Panc1 (cell line): ENCODE measurements at regions of chr3 and their contacts with region 1.

Region 1: GRCh38 chr3:125240496-125240895 is 27.9 kb upstream of the SLC12A8 start:
- DNase-seq: no peak
- ATAC-seq: no peak
- H3K4me3 ChIP-seq: no peak overlapping the region
- H3K27ac ChIP-seq: no peak overlapping the region
- H3K4me1 ChIP-seq: no peaks in the 10 kb centered on the region
- H3K27me3 ChIP-seq: no peaks in the 10 kb centered on the region
- CTCF ChIP-seq: no peak

Region 2: DNA sequence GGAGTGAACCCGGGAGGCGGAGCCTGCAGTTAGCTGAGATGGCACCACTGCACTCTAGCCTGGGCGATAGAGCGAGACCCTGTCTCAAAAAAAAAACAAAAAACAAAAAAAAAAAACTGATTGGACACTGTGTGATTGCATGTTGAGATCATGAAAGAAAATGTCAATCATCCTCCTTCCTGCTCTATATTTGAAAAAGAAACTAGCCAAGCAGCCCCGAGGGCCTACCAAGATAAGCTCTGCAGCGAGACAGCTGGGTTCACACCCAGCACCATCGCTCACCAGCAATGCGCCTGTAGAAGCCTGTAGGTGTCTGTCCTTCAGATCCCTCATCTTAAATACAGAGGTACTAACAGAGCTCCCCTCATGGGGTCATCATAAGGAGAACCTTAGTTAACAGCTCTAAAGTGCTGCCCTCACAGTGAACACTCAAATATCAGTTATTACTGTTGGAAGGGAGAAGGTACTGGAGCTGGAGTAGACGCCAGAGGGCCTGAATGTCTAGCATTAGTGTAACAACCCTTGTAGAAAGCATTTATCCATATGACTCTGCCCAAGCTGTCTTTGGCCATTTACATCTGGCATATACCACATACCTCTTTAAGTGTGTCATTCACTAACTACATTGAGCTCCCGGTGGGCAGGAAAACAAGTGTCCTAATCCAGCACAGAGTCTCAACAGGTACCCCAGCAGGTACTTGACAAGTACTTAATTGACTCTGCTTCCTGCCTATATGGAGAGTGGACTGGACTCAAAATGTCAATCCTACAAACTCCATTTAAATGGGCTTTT is 1379.3 kb before region 1 on chr3:
- CTCF ChIA-PET with region 1: no interaction called
- POLR2A ChIA-PET with region 1: interaction called, 12 read pairs
- in situ Hi-C with region 1: no loop called
- intact Hi-C with region 1: no loop called
- DNase-seq: no peak
- ATAC-seq: peak; percentile 56; the same call in 1 of the 2 replicates
- H3K4me3 ChIP-seq: no peak overlapping the region
- H3K27ac ChIP-seq: no peak overlapping the region
- H3K4me1 ChIP-seq: no peaks in the 10 kb centered on the region
- H3K27me3 ChIP-seq: no peaks in the 10 kb centered on the region
- CTCF ChIP-seq: no peak

Region 3: DNA sequence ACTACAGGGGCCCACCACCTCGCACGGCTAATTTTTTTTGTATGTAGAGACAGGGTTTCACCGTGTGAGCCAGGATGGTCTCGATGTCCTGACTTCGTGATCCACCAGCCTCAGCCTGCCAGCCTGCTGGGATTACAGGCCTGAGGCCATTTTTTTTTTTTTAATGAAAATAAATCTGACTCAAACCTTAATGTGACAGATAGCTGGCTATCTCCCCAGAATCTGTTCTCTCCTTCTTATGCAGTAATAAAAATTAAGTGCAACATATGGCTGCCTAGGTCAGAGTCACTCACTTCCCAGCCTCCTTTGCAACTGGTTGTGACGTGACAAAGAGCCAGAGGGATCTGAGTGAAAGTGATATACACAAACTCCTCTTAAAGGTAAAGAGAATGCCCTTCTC is 81.7 kb after region 1 on chr3:
- CTCF ChIA-PET with region 1: no interaction called
- POLR2A ChIA-PET with region 1: no interaction called
- in situ Hi-C with region 1: no loop called
- intact Hi-C with region 1: no loop called
- DNase-seq: no peak
- ATAC-seq: peak; percentile 34; the same call in 1 of the 2 replicates
- H3K4me3 ChIP-seq: no peak overlapping the region
- H3K27ac ChIP-seq: no peak overlapping the region
- H3K4me1 ChIP-seq: peaks cover 7% of the 10 kb centered on the region; the same call in 1 of the 2 replicates
- H3K27me3 ChIP-seq: no peaks in the 10 kb centered on the region
- CTCF ChIP-seq: no peak

Region 4: GRCh38 chr3:125366132-125366531 is 125.6 kb after region 1 on chr3:
- CTCF ChIA-PET with region 1: no interaction called
- POLR2A ChIA-PET with region 1: interaction called, 14 read pairs
- in situ Hi-C with region 1: no loop called
- intact Hi-C with region 1: no loop called
- DNase-seq: no peak
- ATAC-seq: no peak
- H3K4me3 ChIP-seq: no peak overlapping the region
- H3K27ac ChIP-seq: no peak overlapping the region
- H3K4me1 ChIP-seq: peaks cover 3% of the 10 kb centered on the region; the same call in 1 of the 2 replicates
- H3K27me3 ChIP-seq: no peaks in the 10 kb centered on the region
- CTCF ChIP-seq: no peak

Region 5: GRCh38 chr3:126621171-126621570 is 1380.7 kb after region 1 on chr3:
- CTCF ChIA-PET with region 1: no interaction called
- POLR2A ChIA-PET with region 1: no interaction called
- in situ Hi-C with region 1: no loop called
- intact Hi-C with region 1: no loop called
- DNase-seq: no peak
- ATAC-seq: peak; percentile 72
- H3K4me3 ChIP-seq: no peak overlapping the region
- H3K27ac ChIP-seq: no peak overlapping the region
- H3K4me1 ChIP-seq: no peaks in the 10 kb centered on the region
- H3K27me3 ChIP-seq: no peaks in the 10 kb centered on the region
- CTCF ChIP-seq: no peak